ENCODE measurements at regions of chr22 and their contacts with region 1.

Region 1: GRCh38 chr22:35430897-35431322 is 31.0 kb downstream of the MCM5 start:
- H3K4me3 ChIP-seq: no peak overlapping the region
- H3K27ac ChIP-seq: no peak overlapping the region
- H3K4me1 ChIP-seq: no peaks in the 10 kb centered on the region
- CTCF ChIP-seq: 0 out of 2 replicates have a peak, but pooled peaks have one; percentile 21

Region 2: DNA sequence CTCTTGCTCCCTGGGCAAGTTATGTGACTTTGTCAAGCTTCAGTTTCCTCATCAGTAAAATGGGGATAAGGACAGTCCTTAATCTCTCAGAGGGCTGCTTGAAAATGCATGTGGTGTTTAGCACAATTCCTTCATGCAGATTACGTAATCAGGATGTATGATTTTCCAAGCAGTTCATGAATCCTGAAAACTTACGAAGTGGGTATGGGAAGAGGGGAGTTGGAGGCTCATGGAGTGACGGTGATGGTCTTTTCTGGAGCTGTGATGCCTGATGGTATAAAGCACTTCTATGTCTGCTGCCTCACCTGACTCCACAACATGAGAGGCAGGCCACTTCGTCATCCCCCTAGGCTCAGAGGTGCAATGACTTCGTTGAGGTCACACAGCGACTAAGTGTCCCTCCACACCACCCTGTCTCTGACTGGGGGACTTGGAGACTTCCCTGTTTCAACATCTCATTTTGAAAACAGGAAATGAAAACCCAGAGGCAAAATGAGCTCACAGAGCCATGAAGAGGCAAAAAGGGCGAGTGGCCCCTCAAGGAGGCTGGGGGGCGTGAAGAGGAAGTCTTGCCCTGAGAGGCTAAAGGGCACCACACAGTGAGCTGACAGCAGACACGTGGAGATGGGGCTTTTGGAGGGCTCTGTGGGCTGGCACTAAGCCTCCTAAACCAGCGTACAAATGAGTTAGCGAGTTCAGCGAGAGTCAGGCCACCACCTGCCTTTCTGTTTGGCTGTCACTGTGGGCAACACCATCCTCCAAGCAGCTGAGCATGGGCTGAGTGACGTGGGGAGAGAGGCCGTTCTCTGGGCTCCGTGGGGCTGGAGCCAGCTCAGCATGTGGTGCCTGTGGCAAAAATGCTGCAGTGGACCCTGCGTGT is 20.9 kb before region 1 on chr22:
- CTCF ChIA-PET with region 1: interaction called, 27 read pairs
- POLR2A ChIA-PET with region 1: interaction called, 4 read pairs
- H3K4me3 ChIP-seq: no peak overlapping the region
- H3K27ac ChIP-seq: no peak overlapping the region
- H3K4me1 ChIP-seq: no peaks in the 10 kb centered on the region
- CTCF ChIP-seq: no peak

Region 3: DNA sequence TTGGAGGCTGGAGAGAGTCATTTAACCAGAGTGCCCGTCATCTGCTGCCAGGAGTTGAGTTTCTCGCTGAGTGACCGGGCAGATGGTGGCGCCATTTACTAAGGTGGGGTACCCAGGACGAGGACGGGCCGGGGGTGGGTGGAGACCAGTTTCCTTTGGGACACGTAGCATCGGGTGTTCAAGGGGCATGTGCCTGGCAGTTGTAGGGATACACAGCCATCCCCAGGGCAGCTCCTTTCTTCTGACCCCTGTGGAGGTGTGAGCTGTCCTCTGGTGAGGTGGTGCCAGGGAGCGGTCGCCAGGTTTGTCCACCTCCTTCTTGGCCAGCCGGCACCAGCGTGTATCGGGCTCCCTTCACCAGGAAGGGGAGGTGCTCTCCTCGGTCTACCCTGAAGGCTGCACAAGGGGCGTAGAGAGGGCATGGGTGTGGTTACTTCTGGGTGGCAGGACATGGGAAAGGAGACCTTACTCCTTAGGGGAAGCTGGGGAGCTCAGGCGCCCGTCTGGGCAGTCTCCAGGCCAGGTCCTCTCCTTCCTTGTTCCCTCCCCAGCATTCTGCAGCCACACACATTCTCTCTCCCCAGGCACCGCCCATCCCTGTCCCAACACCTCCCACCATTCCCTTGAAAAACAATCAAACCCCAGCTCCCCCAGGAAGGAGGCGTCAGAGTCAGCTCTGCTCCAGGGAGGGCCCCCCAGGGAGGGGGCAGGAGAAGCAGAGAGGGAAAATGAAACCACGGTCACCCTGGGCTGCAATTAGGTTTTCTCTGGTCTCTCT is 196.5 kb after region 1 on chr22:
- CTCF ChIA-PET with region 1: interaction called, 13 read pairs
- POLR2A ChIA-PET with region 1: no interaction called
- H3K4me3 ChIP-seq: peak overlapping the region; percentile 40
- H3K27ac ChIP-seq: peak overlapping the region; percentile 53; the same call in 1 of the 2 replicates
- H3K4me1 ChIP-seq: no peaks in the 10 kb centered on the region
- CTCF ChIP-seq: peak; percentile 95